ENCODE measurements at regions of chr5 and their contacts with region 1.

Region 1: GRCh38 chr5:95620030-95620869 is at the start of gene GPR150:
- DNase-seq: peak; percentile 50
- H3K4me3 Mint-ChIP-seq: peak within 1 kb of the TSS; percentile 81
- H3K27ac Mint-ChIP-seq: peak within 1 kb of the TSS; percentile 84
- H3K4me1 Mint-ChIP-seq: peaks cover 31% of the 10 kb centered on the region
- H3K27me3 Mint-ChIP-seq: peaks cover 18% of the 10 kb centered on the region
- total RNA-seq, gene GPR150: 0.11 and 0.14 TPM in 2 replicates

Region 2: DNA sequence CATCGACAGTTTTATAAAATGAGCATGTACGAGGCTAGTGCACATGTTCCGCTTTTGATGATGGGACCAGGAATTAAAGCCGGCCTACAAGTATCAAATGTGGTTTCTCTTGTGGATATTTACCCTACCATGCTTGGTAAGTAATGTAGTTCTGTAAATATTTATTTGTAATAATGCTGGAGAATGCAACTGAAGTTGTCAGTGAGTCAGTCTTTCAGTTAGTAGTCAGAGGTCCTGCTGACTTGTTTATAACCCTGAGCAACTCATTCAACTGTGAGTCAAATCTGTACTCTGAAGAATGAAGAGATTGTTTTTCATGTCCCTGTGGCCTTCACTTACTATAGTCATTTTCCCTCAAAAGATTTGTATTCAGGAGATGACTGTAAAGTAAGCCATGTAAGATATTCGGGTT is 28.8 kb before region 1 on chr5:
- intact Hi-C with region 1: loop called (anchors 1 kb)
- DNase-seq: no peak
- H3K4me3 Mint-ChIP-seq: no peak overlapping the region
- H3K27ac Mint-ChIP-seq: peak overlapping the region; percentile 65
- H3K4me1 Mint-ChIP-seq: peaks cover 30% of the 10 kb centered on the region
- H3K27me3 Mint-ChIP-seq: no peaks in the 10 kb centered on the region

Measured in activated T-helper 2 cell treated with anti-CD3 and anti-CD28 coated beads, Interferon-gamma antibody, Interleukin-2, Interleukin-4, amounts not matched to agents 10 μg/mL and 5 μg/mL and 100 μg/mL, durations not matched to agents 14 hours and 24 hours and 36 hours (primary cell).